ENCODE measurements at regions of chr10 and their contacts with region 1.

Region 1: DNA sequence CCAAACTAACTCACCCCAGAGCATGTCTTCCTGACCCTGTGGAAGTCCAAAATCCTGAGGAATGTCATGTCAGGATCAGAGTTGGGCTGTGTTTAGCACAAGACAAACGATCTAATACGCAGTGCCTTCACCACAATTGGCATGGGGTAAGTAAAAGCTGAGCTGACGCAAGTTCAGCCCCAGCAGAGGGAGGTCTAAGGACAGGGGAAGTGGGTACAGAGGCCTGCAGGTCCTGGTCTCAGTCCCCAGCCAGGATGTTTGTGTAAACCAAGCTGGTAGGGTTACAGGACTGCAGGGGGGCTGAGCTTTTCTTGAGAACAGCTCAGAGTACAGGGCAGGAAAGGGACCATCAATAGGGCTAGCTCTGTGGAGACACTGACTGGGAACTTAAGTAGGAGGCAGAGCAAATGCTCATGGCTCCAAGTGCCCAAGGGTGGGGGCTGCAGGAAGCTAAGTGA is 5.3 kb upstream of the KCNIP2 start:
- DNase-seq: no peak
- H3K27ac ChIP-seq: no peak overlapping the region
- CTCF ChIP-seq: no peak

Region 2: DNA sequence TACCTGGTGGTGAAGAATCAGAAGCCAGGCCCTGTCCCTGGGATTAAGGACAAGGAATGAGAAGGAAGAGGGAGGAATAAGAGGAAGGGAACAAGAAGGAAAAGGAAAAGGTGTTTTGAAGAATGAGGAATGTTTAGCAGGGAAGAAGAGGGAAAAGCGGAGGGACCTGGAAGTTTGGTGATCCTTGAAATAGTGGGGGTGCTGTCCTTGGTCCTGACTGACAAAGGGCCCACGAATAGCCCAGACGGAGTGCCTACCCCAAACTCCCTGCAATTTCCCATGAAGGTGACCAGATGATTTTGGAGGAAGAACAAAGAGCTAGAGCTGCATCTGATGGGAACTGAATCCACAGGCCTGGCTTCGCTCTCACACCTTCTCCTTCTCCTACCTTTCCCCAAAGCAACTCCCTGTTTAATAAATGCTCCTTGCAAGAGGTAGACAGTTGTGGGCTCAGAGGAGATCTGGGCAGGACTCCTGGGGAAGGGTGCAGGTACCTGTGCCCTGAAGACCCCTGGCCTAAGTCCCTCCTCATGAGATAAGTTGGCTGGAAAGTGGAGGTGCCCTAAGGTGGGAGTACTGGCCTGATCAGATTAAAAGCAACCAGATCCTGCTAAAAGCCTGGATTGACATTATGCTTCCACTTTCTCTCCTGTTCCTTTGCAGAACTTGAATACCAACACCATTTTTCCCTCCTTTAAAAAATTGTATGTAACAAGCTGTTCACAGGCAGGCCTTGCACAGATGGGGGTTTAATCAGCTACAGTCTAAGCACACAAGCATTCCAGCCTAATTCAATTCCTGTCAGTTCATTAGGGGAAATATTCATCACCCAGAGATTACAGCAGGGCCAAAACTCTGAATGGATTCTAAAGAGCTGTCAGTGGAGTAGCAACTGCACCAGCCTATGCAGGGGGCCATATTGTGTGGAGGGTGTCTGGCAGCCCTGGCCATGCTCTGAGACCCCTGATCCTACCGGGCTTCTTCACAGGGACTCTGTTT is 767.7 kb before region 1 on chr10:
- CTCF ChIA-PET with region 1: interaction called, 12 read pairs
- POLR2A ChIA-PET with region 1: no interaction called
- DNase-seq: peak; percentile 58
- H3K27ac ChIP-seq: no peak overlapping the region
- CTCF ChIP-seq: no peak

Region 3: GRCh38 chr10:101291331-101292193 is 557.4 kb before region 1 on chr10:
- CTCF ChIA-PET with region 1: no interaction called
- POLR2A ChIA-PET with region 1: no interaction called
- DNase-seq: peak; percentile 55
- H3K27ac ChIP-seq: no peak overlapping the region
- CTCF ChIP-seq: peak; percentile 62

Region 4: DNA sequence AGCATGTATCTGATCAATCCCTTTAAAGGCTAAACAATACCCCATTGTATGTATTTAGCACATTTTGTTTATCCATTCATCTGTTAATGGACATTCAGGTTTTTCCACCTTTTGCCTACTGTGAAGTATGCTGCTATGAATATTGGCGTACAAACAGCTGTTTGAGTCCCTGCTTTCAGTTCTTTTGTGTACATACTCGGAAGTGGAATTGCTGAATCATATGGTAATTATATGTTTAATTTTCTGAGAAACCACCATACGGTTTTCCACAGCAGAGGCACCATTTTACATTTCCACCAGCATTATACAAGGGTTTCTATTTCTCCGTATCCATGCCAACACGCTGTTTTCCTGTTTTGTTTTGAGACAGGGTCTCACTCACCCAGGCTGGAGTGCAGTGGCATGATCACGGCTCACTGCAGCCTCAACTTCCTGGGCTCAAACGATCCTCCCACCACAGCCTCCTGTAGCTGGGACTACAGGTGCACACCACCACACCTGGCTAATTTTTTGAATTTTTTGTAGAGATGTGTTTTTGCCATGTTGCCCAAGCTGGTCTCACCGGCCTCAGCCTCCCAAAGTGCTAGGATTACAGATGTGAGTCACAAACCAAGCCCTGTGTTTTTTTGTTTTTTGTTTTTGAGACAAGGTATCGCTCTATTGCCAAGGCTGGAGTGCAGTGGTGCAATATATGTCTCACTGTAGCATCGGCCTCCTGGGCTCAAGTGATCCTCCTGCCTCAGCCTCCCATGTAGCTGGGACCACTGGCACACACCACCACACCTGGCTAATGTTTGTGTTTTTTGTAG is 131.9 kb before region 1 on chr10:
- CTCF ChIA-PET with region 1: no interaction called
- POLR2A ChIA-PET with region 1: no interaction called
- DNase-seq: no peak
- H3K27ac ChIP-seq: no peak overlapping the region
- CTCF ChIP-seq: no peak

Region 5: DNA sequence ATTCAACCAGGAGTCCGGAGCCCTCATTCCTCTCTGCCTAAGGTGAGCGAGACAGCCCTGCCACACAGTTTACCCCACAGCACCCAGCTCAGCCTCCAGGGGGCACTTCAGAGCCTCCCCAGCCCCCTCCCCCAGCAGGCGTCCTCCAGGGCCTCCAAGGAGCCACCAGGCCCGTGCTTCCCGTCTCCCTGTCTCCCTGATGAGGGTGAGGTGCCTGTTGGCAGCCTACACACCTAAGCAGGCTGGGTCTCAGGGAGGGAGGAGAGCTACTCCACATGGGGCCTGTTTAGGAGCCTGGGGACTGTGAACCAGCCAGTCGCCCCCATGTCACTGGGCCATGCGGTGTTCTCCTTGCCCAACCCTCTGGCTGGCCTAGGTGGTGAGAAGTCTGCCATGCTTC is 766.4 kb after region 1 on chr10:
- CTCF ChIA-PET with region 1: no interaction called
- POLR2A ChIA-PET with region 1: no interaction called
- DNase-seq: no peak
- H3K27ac ChIP-seq: peak overlapping the region; percentile 43
- CTCF ChIP-seq: no peak